Panc1 (cell line): ENCODE measurements at regions of chrX and their contacts with region 1.

Region 1: GRCh38 chrX:18210470-18210869 is 10.2 kb downstream of the BEND2 start:
- DNase-seq: no peak
- ATAC-seq: no peak
- H3K4me3 ChIP-seq: no peak overlapping the region
- H3K27ac ChIP-seq: no peak overlapping the region
- H3K4me1 ChIP-seq: no peaks in the 10 kb centered on the region
- H3K27me3 ChIP-seq: no peaks in the 10 kb centered on the region
- CTCF ChIP-seq: peak; percentile 7; the same call in 1 of the 2 replicates

Region 2: GRCh38 chrX:17788439-17788838 is 422.0 kb before region 1 on chrX:
- CTCF ChIA-PET with region 1: no interaction called
- POLR2A ChIA-PET with region 1: no interaction called
- in situ Hi-C with region 1: no loop called
- intact Hi-C with region 1: loop called (anchors 5 kb)
- DNase-seq: peak; percentile 15
- ATAC-seq: no peak
- H3K4me3 ChIP-seq: no peak overlapping the region
- H3K27ac ChIP-seq: no peak overlapping the region
- H3K4me1 ChIP-seq: no peaks in the 10 kb centered on the region
- H3K27me3 ChIP-seq: no peaks in the 10 kb centered on the region
- CTCF ChIP-seq: peak; percentile 80

Region 3: DNA sequence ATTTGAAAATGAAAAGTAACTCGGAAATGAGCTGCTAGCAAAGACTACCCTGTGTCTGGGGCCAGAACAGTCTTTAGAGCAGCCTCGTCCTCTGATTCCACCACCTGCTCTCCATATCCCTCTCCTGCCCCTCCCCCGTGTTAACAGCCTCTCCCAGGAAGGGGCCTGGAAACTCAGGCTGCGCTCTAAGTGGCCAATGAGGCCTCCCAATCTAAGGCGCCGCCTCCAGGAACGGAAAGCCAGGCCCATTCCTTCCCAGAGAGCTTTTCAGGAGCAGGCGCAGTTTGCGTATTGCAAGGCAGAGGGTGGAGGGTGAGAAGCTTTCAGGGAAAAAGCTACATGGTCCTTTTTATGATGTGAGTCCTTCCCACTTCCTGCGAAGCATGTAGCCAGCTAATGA is 430.2 kb after region 1 on chrX:
- CTCF ChIA-PET with region 1: no interaction called
- POLR2A ChIA-PET with region 1: no interaction called
- in situ Hi-C with region 1: no loop called
- intact Hi-C with region 1: no loop called
- DNase-seq: no peak
- ATAC-seq: no peak
- H3K4me3 ChIP-seq: no peak overlapping the region
- H3K27ac ChIP-seq: no peak overlapping the region
- H3K4me1 ChIP-seq: no peaks in the 10 kb centered on the region
- H3K27me3 ChIP-seq: no peaks in the 10 kb centered on the region
- CTCF ChIP-seq: no peak

Region 4: GRCh38 chrX:18769812-18770573 is 559.5 kb after region 1 on chrX:
- CTCF ChIA-PET with region 1: no interaction called
- POLR2A ChIA-PET with region 1: no interaction called
- in situ Hi-C with region 1: no loop called
- intact Hi-C with region 1: no loop called
- DNase-seq: no peak
- ATAC-seq: no peak
- H3K4me3 ChIP-seq: no peak overlapping the region
- H3K27ac ChIP-seq: no peak overlapping the region
- H3K4me1 ChIP-seq: no peaks in the 10 kb centered on the region
- H3K27me3 ChIP-seq: no peaks in the 10 kb centered on the region
- CTCF ChIP-seq: no peak